HAP-1 (cell line): ENCODE measurements at regions of chr5 and their contacts with region 1.

Region 1: DNA sequence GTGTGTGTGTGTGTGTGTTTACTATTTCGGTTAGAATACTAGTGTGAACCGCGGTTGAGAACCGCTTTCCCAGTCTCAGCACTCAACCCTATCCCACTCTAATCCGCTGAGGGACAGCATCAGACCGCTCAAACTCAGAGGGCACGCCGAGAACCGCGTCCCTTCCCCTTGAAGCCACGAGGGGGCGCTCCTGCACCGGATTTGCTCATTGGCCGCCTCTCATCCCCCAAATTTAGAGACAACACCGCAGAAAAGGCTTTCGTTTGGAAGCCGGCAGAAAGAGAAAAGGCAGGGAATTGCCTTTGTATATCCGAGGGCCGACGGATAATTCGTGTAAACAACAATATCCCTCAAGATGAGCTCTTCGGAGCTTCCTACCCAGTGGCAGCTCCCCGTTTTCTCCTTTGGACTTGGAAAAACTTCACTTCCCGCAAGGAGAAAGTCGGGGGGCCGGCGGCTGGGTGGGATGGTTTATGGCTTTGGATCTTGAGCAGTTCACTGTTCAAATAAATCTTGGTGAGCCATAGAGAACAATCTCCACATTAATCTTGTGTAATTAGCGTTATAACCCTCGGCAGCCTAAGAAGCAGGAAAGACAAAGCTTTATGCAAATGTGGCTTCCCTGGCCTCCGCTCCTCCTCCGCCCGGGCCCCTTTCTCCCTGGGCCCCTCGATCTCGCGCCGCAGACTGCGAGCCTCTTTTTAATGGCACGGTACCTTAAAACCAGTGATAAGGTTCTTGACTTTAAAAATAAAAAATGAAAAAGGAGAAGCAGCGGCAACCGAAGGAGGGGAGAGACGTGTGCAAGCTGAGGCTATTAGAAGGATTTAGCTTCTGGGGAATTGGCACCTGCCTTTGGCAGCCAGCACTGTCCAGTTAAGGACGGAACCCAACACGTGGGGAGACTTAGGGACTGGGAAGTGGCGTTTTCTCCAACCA is 296.8 kb downstream of the PARP8 start:
- DNase-seq: peak; percentile 76 to 87
- H3K4me3 ChIP-seq: peak overlapping the region; percentile 34
- H3K4me1 ChIP-seq: peaks cover 10% of the 10 kb centered on the region
- H3K27me3 ChIP-seq: no peaks in the 10 kb centered on the region

Region 2: GRCh38 chr5:52007230-52007858 is 1044.1 kb after region 1 on chr5:
- in situ Hi-C with region 1: loop called (anchors 25 kb)
- DNase-seq: peak; percentile 55 to 74
- H3K4me3 ChIP-seq: no peak overlapping the region
- H3K4me1 ChIP-seq: no peaks in the 10 kb centered on the region
- H3K27me3 ChIP-seq: no peaks in the 10 kb centered on the region

Region 3: GRCh38 chr5:52356311-52356918 is 1393.2 kb after region 1 on chr5:
- in situ Hi-C with region 1: loop called (anchors 25 kb)
- DNase-seq: peak in 1 of 2 experiments; percentile 53
- H3K4me3 ChIP-seq: no peak overlapping the region
- H3K4me1 ChIP-seq: peaks cover 10% of the 10 kb centered on the region
- H3K27me3 ChIP-seq: no peaks in the 10 kb centered on the region

Region 4: DNA sequence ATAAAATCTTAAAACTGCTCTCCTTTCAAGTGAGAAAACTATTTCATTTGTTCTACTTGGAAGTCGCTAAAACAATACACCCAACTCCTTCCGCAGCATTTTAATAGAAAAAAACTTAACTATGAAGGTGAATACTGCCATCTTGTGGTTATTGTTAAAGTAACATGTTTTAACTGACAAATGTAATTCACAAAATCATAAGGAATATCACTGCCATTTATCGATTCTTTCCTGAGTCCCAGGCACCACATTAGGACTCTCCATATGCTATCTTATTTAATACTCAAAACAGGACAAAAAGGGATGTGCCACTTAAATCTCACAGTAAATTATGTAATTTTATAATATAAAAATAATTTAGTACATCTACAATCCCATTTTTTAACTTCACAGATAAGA is 1694.0 kb after region 1 on chr5:
- in situ Hi-C with region 1: loop called (anchors 25 kb)
- DNase-seq: peak in 1 of 2 experiments; percentile 49
- H3K4me3 ChIP-seq: no peak overlapping the region
- H3K4me1 ChIP-seq: no peaks in the 10 kb centered on the region
- H3K27me3 ChIP-seq: no peaks in the 10 kb centered on the region